Naive thymus-derived CD4-positive, alpha-beta T cell (primary cell): ENCODE measurements at regions of chr17 and their contacts with region 1.

Region 1: GRCh38 chr17:48878918-48879898 is 13.4 kb upstream of the ATP5MC1 start:
- DNase-seq: peak; percentile 21 to 77 (median 69)
- ATAC-seq: peak; percentile 97
- H3K4me3 ChIP-seq: no peak overlapping the region
- H3K4me3 Mint-ChIP-seq: no peak overlapping the region
- H3K27ac ChIP-seq: no peak overlapping the region
- H3K27ac Mint-ChIP-seq: no peak overlapping the region
- H3K4me1 ChIP-seq: no peaks in the 10 kb centered on the region
- H3K4me1 Mint-ChIP-seq: peaks cover 0 to 16% (median under 1%) of the 10 kb centered on the region in 7 donors
- H3K27me3 ChIP-seq: no peaks in the 10 kb centered on the region
- H3K27me3 Mint-ChIP-seq: peaks cover 0 to 4% (median 0%) of the 10 kb centered on the region in 5 donors

Region 2: GRCh38 chr17:48671697-48672171 is 207.5 kb before region 1 on chr17:
- CTCF ChIA-PET with region 1: interaction called, 41 read pairs
- POLR2A ChIA-PET with region 1: interaction called, 4 read pairs
- intact Hi-C with region 1: loop called (anchors 1 to 2 kb)
- DNase-seq: peak; percentile 42 to 70 (median 60)
- ATAC-seq: peak; percentile 90
- H3K4me3 ChIP-seq: no peak overlapping the region
- H3K4me3 Mint-ChIP-seq: peak overlapping the region in 8 of 10 donors; percentile 16 to 62 (median 54)
- H3K27ac ChIP-seq: no peak overlapping the region
- H3K27ac Mint-ChIP-seq: no peak overlapping the region
- H3K4me1 ChIP-seq: no peaks in the 10 kb centered on the region
- H3K4me1 Mint-ChIP-seq: peaks cover 0 to 7% (median 5%) of the 10 kb centered on the region in 7 donors
- H3K27me3 ChIP-seq: no peaks in the 10 kb centered on the region
- H3K27me3 Mint-ChIP-seq: peaks cover 28 to 54% (median 42%) of the 10 kb centered on the region in 5 donors

Region 3: GRCh38 chr17:48724251-48725003 is 154.8 kb before region 1 on chr17:
- CTCF ChIA-PET with region 1: interaction called, 17 read pairs
- POLR2A ChIA-PET with region 1: interaction called, 3 read pairs
- intact Hi-C with region 1: loop called (anchors 1 to 2 kb)
- DNase-seq: peak; percentile 46 to 73 (median 65)
- ATAC-seq: peak; percentile 81
- H3K4me3 ChIP-seq: no peak overlapping the region
- H3K4me3 Mint-ChIP-seq: peak overlapping the region; percentile 64 to 82 (median 74)
- H3K27ac ChIP-seq: no peak overlapping the region
- H3K27ac Mint-ChIP-seq: peak overlapping the region in 2 of 9 donors; percentile 34 to 87
- H3K4me1 ChIP-seq: peaks cover 27 to 36% of the 10 kb centered on the region in 2 donors
- H3K4me1 Mint-ChIP-seq: peaks cover 26 to 61% (median 41%) of the 10 kb centered on the region in 7 donors
- H3K27me3 ChIP-seq: peaks cover 43 to 92% of the 10 kb centered on the region in 2 donors
- H3K27me3 Mint-ChIP-seq: peaks cover 87 to 99% (median 90%) of the 10 kb centered on the region in 5 donors

Region 4: GRCh38 chr17:48816774-48817590 is 62.2 kb before region 1 on chr17 and contains the start of gene TTLL6:
- CTCF ChIA-PET with region 1: interaction called, 112 read pairs
- POLR2A ChIA-PET with region 1: no interaction called
- intact Hi-C with region 1: loop called (anchors 1 kb)
- DNase-seq: peak; percentile 54 to 90 (median 80)
- ATAC-seq: peak; percentile 98
- H3K4me3 ChIP-seq: peak within 1 kb of the TSS; percentile 60
- H3K4me3 Mint-ChIP-seq: peak within 1 kb of the TSS; percentile 77 to 89 (median 85)
- H3K27ac ChIP-seq: no peak within 1 kb of the TSS
- H3K27ac Mint-ChIP-seq: peak within 1 kb of the TSS in 3 of 9 donors; percentile 3 to 74 (median 14)
- H3K4me1 ChIP-seq: peaks cover 0 to 13% of the 10 kb centered on the region in 2 donors
- H3K4me1 Mint-ChIP-seq: peaks cover 9 to 24% (median 15%) of the 10 kb centered on the region in 7 donors
- H3K27me3 ChIP-seq: no peaks in the 10 kb centered on the region
- H3K27me3 Mint-ChIP-seq: peaks cover 0 to 79% (median 17%) of the 10 kb centered on the region in 5 donors
- total RNA-seq, gene TTLL6: not detected

Region 5: GRCh38 chr17:48915459-48916282 is 36.5 kb after region 1 on chr17:
- CTCF ChIA-PET with region 1: no interaction called
- POLR2A ChIA-PET with region 1: no interaction called
- intact Hi-C with region 1: no loop called
- DNase-seq: peak in 2 of 9 donors; percentile 30 to 63
- ATAC-seq: peak; percentile 93
- H3K4me3 ChIP-seq: no peak overlapping the region
- H3K4me3 Mint-ChIP-seq: peak overlapping the region in 1 of 10 donors; percentile 87
- H3K27ac ChIP-seq: peak overlapping the region; percentile 23
- H3K27ac Mint-ChIP-seq: peak overlapping the region in 8 of 9 donors; percentile 10 to 99 (median 64)
- H3K4me1 ChIP-seq: peaks cover 9 to 18% of the 10 kb centered on the region in 2 donors
- H3K4me1 Mint-ChIP-seq: peaks cover 25 to 58% (median 46%) of the 10 kb centered on the region in 7 donors
- H3K27me3 ChIP-seq: no peaks in the 10 kb centered on the region
- H3K27me3 Mint-ChIP-seq: no peaks in the 10 kb centered on the region

Region 6: GRCh38 chr17:49031965-49032928 is 153.0 kb after region 1 on chr17:
- CTCF ChIA-PET with region 1: no interaction called
- POLR2A ChIA-PET with region 1: no interaction called
- intact Hi-C with region 1: loop called (anchors 2 to 5 kb)
- DNase-seq: peak in 8 of 9 donors; percentile 7 to 49 (median 41)
- ATAC-seq: peak; percentile 81
- H3K4me3 ChIP-seq: no peak overlapping the region
- H3K4me3 Mint-ChIP-seq: no peak overlapping the region
- H3K27ac ChIP-seq: no peak overlapping the region
- H3K27ac Mint-ChIP-seq: no peak overlapping the region
- H3K4me1 ChIP-seq: no peaks in the 10 kb centered on the region
- H3K4me1 Mint-ChIP-seq: peaks cover 0 to 7% (median 6%) of the 10 kb centered on the region in 7 donors
- H3K27me3 ChIP-seq: no peaks in the 10 kb centered on the region
- H3K27me3 Mint-ChIP-seq: peaks cover 0 to 10% (median 9%) of the 10 kb centered on the region in 5 donors